H1 (cell line): ENCODE measurements at regions of chr5 and their contacts with region 1.

Region 1: DNA sequence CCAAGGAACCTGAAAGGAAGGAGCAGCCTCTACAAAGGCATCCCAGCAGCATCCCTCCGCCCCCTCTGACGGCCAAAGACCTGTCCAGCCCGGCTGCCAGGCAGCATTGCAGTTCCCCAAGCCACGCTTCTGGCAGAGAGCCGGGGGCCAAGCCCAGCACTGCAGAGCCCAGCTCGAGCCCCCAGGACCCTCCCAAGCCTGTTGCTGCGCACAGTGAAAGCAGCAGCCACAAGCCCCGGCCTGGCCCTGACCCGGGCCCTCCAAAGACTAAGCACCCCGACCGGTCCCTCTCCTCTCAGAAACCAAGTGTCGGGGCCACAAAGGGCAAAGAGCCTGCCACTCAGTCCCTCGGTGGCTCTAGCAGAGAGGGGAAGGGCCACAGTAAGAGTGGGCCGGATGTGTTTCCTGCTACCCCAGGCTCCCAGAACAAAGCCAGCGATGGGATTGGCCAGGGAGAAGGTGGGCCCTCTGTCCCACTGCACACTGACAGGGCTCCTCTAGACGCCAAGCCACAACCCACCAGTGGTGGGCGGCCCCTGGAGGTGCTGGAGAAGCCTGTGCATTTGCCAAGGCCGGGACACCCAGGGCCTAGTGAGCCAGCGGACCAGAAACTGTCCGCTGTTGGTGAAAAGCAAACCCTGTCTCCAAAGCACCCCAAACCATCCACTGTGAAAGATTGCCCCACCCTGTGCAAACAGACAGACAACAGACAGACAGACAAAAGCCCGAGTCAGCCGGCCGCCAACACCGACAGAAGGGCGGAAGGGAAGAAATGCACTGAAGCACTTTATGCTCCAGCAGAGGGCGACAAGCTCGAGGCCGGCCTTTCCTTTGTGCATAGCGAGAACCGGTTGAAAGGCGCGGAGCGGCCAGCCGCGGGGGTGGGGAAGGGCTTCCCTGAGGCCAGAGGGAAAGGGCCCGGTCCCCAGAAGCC is 30.8 kb downstream of the CD180 start:
- DNase-seq: peak; percentile 64 to 89
- H3K4me3 ChIP-seq: peak overlapping the region in 1 of 4 experiments; percentile 41; a peak in 2 of 8 replicates
- H3K27ac ChIP-seq: no peak overlapping the region; the same call in 1 of the 2 replicates
- H3K4me1 ChIP-seq: peaks cover 0 to 13% (median 6%) of the 10 kb centered on the region in 4 experiments; a peak in 3 of 7 replicates
- H3K27me3 ChIP-seq: no peaks in the 10 kb centered on the region
- CTCF ChIP-seq: peak; percentile 80 to 86 (median 82)
- EP300 ChIP-seq: no peak
- POLR2A ChIP-seq: no peak; a peak in 1 of 3 replicates
- RAD21 ChIP-seq: peak; percentile 64 to 73

Region 2: DNA sequence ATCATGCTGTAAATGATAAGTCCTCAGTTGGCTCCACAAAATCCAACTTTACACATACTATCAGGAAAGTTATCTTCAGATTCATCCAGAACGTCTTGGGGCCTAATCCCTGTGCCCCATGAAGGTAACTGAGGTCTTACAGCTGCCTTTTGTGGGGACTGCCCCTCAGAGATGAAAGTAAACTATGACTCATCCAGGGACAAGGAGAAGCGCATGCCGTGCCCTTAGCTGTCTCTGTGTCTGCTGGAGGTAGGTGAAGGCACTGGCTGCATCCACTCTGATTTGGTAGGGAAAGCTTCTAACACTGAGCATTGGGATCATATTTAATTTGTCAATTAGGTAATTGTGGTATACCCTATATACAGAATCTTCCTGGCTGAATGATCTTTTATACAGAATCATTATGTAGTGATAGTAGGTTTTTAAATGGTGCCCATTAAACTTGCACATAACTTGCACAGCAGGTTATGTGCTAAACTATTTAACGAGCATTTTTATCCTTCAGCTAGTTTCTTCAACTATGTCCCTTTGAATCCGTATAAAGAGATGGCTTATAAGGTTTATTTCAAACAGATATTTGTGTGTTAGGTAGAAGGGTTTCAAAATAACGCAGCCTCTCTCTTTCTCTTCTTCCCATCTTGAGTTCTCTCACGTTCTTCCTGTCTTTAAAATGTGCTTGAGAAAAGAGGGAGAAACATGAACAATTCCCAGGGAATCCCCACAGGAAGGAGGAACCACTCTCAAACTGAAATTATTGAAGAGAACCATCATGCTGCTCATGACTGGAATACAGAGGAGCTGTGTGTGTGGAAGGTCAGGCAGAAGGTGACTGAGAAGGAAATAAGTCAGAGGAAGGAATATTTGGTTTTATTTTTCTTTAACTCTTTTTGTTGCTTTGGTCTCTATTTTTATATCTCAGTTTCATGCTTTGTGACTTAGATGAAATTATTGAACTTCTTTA is 220.1 kb before region 1 on chr5:
- CTCF ChIA-PET with region 1: no interaction called
- POLR2A ChIA-PET with region 1: no interaction called
- DNase-seq: no peak
- H3K4me3 ChIP-seq: no peak overlapping the region
- H3K27ac ChIP-seq: no peak overlapping the region
- H3K4me1 ChIP-seq: peaks cover 0 to 3% (median 1%) of the 10 kb centered on the region in 4 experiments; a peak in 2 of 7 replicates
- H3K27me3 ChIP-seq: no peaks in the 10 kb centered on the region
- CTCF ChIP-seq: no peak
- EP300 ChIP-seq: no peak
- POLR2A ChIP-seq: no peak
- RAD21 ChIP-seq: no peak

Region 3: DNA sequence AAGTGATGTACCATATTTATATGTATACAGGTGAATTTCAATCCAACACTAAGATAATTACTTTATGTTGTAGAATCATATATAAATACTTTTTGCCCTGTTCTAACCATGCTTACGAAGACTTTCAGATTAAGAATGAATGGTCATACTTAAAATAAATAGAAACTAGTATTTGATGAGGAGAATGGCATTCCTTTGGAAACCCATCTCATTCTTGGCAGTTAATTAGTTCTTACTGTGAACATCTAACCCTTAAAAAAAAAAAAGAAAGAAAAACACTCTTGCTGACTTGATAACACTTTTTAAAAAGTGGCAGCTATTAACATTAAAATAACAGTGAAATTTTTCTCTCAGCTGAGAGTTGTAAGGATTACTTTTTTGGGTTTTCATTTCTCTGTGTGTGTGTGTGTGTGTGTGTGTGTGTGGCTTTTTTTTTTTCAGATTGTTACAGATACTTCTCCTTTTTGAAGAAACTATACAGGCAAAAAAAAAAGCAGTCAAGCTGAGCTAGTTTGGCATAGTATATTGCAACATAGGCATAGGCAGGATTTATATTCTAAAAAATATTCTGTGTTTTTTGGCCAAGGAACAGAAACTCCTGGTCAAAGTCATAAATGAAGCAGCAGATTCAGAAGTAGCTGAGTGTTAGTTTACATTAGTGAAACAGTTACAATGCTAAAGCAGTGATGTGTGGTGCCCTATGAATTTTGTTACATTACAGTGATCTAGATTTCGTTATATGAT is 132.7 kb before region 1 on chr5:
- CTCF ChIA-PET with region 1: no interaction called
- POLR2A ChIA-PET with region 1: no interaction called
- DNase-seq: no peak
- H3K4me3 ChIP-seq: no peak overlapping the region
- H3K27ac ChIP-seq: no peak overlapping the region
- H3K4me1 ChIP-seq: peaks cover 0 to 15% (median 1%) of the 10 kb centered on the region in 4 experiments; a peak in 4 of 7 replicates
- H3K27me3 ChIP-seq: peaks cover 0 to 1% (median 0%) of the 10 kb centered on the region in 4 experiments; a peak in 1 of 7 replicates
- CTCF ChIP-seq: no peak
- EP300 ChIP-seq: no peak
- POLR2A ChIP-seq: no peak
- RAD21 ChIP-seq: no peak

Region 4: GRCh38 chr5:67182301-67182790 is 16.6 kb after region 1 on chr5:
- CTCF ChIA-PET with region 1: interaction called, 30 read pairs
- POLR2A ChIA-PET with region 1: interaction called, 4 read pairs
- DNase-seq: peak in 1 of 2 experiments; percentile 55
- H3K4me3 ChIP-seq: no peak overlapping the region
- H3K27ac ChIP-seq: no peak overlapping the region
- H3K4me1 ChIP-seq: peaks cover 0 to 5% (median 3%) of the 10 kb centered on the region in 4 experiments; a peak in 4 of 7 replicates
- H3K27me3 ChIP-seq: peaks cover 0 to 4% (median 0%) of the 10 kb centered on the region in 4 experiments; a peak in 2 of 7 replicates
- CTCF ChIP-seq: no peak
- EP300 ChIP-seq: no peak
- POLR2A ChIP-seq: no peak
- RAD21 ChIP-seq: no peak

Region 5: DNA sequence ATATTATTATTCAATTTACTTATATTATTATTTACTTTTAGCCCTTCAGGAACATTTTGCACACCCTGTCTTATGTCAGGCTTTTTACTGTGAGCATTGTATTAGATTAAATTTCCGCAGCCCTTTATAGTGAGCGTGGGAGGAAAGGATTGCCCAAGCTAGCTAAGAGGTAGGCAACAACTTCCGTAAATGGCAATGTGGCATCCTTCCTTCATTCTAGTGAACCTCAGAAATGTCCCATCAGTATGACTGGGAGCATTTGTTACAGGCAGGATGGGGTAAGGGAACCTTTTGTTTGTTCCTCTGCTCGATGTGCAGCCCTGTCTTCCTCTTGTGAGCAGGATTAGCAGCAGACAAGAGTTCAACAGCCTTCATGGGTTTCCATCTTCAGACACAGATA is 37.0 kb after region 1 on chr5:
- CTCF ChIA-PET with region 1: interaction called, 50 read pairs
- POLR2A ChIA-PET with region 1: interaction called, 4 read pairs
- DNase-seq: no peak
- H3K4me3 ChIP-seq: no peak overlapping the region
- H3K27ac ChIP-seq: no peak overlapping the region
- H3K4me1 ChIP-seq: no peaks in the 10 kb centered on the region
- H3K27me3 ChIP-seq: no peaks in the 10 kb centered on the region
- CTCF ChIP-seq: no peak
- EP300 ChIP-seq: no peak
- POLR2A ChIP-seq: no peak
- RAD21 ChIP-seq: no peak

Region 6: DNA sequence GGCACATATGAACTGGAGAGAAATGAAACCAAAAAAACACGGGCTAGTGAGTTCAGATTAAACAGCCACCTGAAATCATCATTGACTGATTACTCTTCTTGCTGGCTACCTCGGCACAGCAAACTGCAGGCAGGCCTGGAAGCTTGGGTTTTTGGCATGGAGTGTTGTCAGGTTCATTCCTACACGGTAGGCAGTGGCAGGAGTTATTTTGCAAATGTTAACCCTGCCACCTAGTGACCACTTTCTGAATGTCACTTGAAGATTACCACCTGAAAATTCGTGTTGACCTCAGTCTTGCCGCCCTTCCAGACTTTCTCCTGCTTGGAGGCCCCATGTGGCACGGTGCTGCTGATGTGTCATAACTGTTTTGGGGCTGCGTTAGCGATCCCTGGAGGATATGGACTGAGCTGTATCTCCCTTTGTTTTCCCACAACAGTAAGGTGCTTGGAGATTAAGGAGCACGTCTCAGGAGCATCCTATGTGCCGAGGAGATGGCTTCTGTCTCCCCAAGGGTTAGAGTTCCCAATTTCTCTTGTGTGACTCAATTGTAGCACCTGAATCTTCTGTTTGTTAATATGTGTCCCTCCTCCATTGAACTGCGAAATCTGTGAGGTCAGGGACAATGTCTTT is 43.5 kb after region 1 on chr5:
- CTCF ChIA-PET with region 1: interaction called, 50 read pairs
- POLR2A ChIA-PET with region 1: interaction called, 4 read pairs
- DNase-seq: peak; percentile 44 to 71
- H3K4me3 ChIP-seq: no peak overlapping the region
- H3K27ac ChIP-seq: no peak overlapping the region
- H3K4me1 ChIP-seq: no peaks in the 10 kb centered on the region
- H3K27me3 ChIP-seq: no peaks in the 10 kb centered on the region
- CTCF ChIP-seq: peak in 2 of 3 experiments; percentile 81 to 82; a peak in 3 of 4 replicates
- EP300 ChIP-seq: no peak
- POLR2A ChIP-seq: no peak
- RAD21 ChIP-seq: peak; percentile 91 to 92